Activated CD4-positive, alpha-beta memory T cell treated with anti-CD3 and anti-CD28 coated beads for 36 hours (primary cell): ENCODE measurements at regions of chr3 and their contacts with region 1.

Region 1: GRCh38 chr3:106428565-106428994 is 559.8 kb upstream of the CBLB start:
- DNase-seq: peak; percentile 72
- H3K4me3 Mint-ChIP-seq: no peak overlapping the region
- H3K27ac Mint-ChIP-seq: peak overlapping the region; percentile 99
- H3K4me1 Mint-ChIP-seq: peaks cover 53% of the 10 kb centered on the region
- H3K27me3 Mint-ChIP-seq: no peaks in the 10 kb centered on the region

Region 2: GRCh38 chr3:105747060-105747541 is 681.5 kb before region 1 on chr3:
- CTCF ChIA-PET with region 1: no interaction called
- POLR2A ChIA-PET with region 1: no interaction called
- intact Hi-C with region 1: loop called (anchors 2 kb)
- DNase-seq: no peak
- H3K4me3 Mint-ChIP-seq: no peak overlapping the region
- H3K27ac Mint-ChIP-seq: peak overlapping the region; percentile 57
- H3K4me1 Mint-ChIP-seq: peaks cover 68% of the 10 kb centered on the region
- H3K27me3 Mint-ChIP-seq: no peaks in the 10 kb centered on the region

Region 3: DNA sequence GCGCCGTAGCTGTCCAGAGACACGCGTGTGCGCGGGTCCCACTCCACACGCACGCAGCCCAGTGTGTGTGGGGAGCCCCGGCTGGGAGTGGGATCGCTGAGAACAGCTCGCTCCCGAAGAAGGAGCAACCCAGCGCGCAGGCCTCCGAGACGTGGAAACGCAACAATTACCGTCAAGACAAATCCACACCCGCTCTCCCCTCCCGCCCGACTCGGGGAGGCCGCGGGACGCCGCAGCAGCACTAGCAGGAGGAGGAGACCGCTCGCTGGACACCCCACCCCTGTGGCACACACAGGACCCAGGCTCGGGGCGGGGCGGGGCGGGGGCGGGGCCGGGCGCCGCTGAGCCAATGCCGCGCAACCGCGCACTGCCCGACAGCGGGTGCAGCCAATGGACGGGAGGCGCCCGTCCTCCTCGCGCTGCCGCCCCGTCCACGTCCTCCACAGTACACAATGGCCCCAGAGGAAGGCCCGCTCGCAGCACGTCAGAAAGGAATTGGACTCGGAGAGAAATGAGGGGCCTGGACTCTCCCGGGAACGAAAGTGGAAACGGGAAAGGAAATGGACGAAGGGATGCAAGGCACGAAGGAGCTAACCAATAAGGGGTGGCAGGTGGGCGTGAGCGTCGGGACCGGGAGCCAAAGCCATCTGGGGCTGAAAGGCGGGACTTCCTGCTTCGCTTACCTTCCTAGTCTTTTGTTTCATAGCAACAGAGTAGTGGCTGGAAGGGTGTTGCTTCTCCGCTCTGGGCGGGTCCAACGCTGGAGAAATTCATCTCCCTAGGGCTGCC is 559.6 kb before region 1 on chr3 and contains the start of gene CBLB:
- CTCF ChIA-PET with region 1: no interaction called
- POLR2A ChIA-PET with region 1: interaction called, 5 read pairs
- intact Hi-C with region 1: loop called (anchors 5 kb)
- DNase-seq: peak; percentile 91
- H3K4me3 Mint-ChIP-seq: peak within 1 kb of the TSS; percentile 94
- H3K27ac Mint-ChIP-seq: peak within 1 kb of the TSS; percentile 94
- H3K4me1 Mint-ChIP-seq: peaks cover 38% of the 10 kb centered on the region
- H3K27me3 Mint-ChIP-seq: no peaks in the 10 kb centered on the region
- total RNA-seq, gene CBLB: 86.1 to 88.2 TPM

Region 4: DNA sequence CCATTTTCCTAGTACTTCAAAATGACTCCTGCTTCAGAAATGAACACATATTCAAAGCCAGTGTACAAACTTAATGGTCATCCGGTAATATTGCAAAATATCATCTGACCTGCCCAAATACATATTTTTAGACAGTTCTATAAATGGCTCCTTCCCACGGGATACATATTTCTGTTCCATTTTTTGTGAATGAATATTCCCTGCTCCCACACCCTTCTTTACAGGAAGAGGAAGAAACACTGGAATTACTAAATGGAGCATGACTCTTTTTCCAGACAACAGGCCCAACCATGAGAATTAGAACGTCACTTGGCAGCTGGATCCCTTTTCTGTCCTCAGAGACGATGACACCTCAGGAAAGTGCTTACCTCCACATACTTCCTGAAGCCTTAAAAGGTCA is 521.7 kb before region 1 on chr3:
- CTCF ChIA-PET with region 1: no interaction called
- POLR2A ChIA-PET with region 1: no interaction called
- intact Hi-C with region 1: no loop called
- DNase-seq: no peak
- H3K4me3 Mint-ChIP-seq: no peak overlapping the region
- H3K27ac Mint-ChIP-seq: no peak overlapping the region
- H3K4me1 Mint-ChIP-seq: peaks cover 2% of the 10 kb centered on the region
- H3K27me3 Mint-ChIP-seq: no peaks in the 10 kb centered on the region

Region 5: DNA sequence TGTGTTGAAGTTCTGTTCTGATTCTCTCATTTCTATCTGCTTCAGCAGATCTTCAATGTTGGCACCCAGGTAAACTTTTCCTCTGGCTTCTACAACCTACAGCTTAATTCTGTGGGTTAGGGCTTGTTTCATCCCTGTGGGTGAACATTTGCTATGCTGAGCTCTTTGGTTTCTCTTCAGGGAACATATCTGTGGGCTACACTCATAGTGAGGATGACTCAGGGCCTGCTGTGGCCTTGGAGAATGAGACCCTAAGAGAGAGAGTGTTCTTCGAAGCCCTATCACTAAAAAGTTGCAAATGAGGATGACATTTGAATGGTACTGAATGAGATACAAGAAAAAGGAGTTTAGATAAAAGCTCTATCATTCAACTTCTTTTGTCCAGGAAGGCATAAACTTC is 213.5 kb before region 1 on chr3:
- CTCF ChIA-PET with region 1: no interaction called
- POLR2A ChIA-PET with region 1: no interaction called
- intact Hi-C with region 1: loop called (anchors 1 kb)
- DNase-seq: peak; percentile 64
- H3K4me3 Mint-ChIP-seq: no peak overlapping the region
- H3K27ac Mint-ChIP-seq: peak overlapping the region; percentile 68
- H3K4me1 Mint-ChIP-seq: peaks cover 61% of the 10 kb centered on the region
- H3K27me3 Mint-ChIP-seq: no peaks in the 10 kb centered on the region

Region 6: DNA sequence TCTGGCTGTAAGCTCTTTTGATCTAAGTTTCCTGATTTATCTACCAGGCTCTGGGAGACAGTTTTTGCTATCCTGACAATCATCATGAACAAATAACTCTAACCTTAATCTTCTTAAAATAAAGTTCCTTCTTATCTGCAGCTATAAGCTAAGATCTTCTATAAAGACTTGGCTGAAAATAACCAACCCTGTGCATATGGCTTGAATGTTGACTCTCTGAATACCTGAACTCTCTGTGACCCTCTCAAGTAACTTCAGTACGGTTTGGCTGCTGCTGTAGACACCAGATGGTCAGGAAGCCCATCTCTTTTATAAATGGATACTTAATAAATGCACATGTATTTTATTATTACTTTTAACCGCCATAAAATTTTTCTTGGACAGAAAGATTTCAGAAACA is 147.4 kb before region 1 on chr3:
- CTCF ChIA-PET with region 1: no interaction called
- POLR2A ChIA-PET with region 1: no interaction called
- intact Hi-C with region 1: no loop called
- DNase-seq: no peak
- H3K4me3 Mint-ChIP-seq: no peak overlapping the region
- H3K27ac Mint-ChIP-seq: no peak overlapping the region
- H3K4me1 Mint-ChIP-seq: peaks cover 13% of the 10 kb centered on the region
- H3K27me3 Mint-ChIP-seq: no peaks in the 10 kb centered on the region

Region 7: GRCh38 chr3:106349191-106349881 is 79.2 kb before region 1 on chr3:
- CTCF ChIA-PET with region 1: no interaction called
- POLR2A ChIA-PET with region 1: no interaction called
- intact Hi-C with region 1: no loop called
- DNase-seq: no peak
- H3K4me3 Mint-ChIP-seq: no peak overlapping the region
- H3K27ac Mint-ChIP-seq: peak overlapping the region; percentile 31
- H3K4me1 Mint-ChIP-seq: peaks cover 18% of the 10 kb centered on the region
- H3K27me3 Mint-ChIP-seq: no peaks in the 10 kb centered on the region

Region 8: GRCh38 chr3:106376016-106376570 is 52.5 kb before region 1 on chr3:
- CTCF ChIA-PET with region 1: no interaction called
- POLR2A ChIA-PET with region 1: no interaction called
- intact Hi-C with region 1: no loop called
- DNase-seq: no peak
- H3K4me3 Mint-ChIP-seq: no peak overlapping the region
- H3K27ac Mint-ChIP-seq: no peak overlapping the region
- H3K4me1 Mint-ChIP-seq: no peaks in the 10 kb centered on the region
- H3K27me3 Mint-ChIP-seq: no peaks in the 10 kb centered on the region

Region 9: DNA sequence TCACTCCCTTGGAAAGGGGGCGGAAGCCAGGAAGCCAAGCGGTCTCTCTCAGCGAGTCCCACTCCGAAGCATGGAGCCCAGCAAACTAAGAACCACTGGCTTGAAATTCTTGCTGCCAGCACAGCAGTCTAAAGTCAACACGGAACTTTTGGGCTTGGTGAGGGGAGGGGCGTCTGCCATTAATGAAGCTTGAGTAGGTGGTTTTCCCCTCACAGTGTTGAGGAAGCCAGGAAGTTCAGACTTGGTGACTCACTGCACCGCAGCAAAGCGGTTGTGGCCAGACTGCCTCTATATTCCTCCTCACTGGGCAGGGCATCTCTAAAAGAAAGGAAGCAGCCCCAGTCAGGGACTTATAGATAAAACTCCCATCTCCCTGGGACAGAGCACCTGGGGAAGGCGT is 105.6 kb after region 1 on chr3:
- CTCF ChIA-PET with region 1: interaction called, 3 read pairs
- POLR2A ChIA-PET with region 1: no interaction called
- intact Hi-C with region 1: loop called (anchors 1 kb)
- DNase-seq: peak; percentile 81
- H3K4me3 Mint-ChIP-seq: peak overlapping the region; percentile 7
- H3K27ac Mint-ChIP-seq: peak overlapping the region; percentile 80
- H3K4me1 Mint-ChIP-seq: peaks cover 27% of the 10 kb centered on the region
- H3K27me3 Mint-ChIP-seq: no peaks in the 10 kb centered on the region